ENCODE measurements at regions of chr10 and their contacts with region 1.

Region 1: DNA sequence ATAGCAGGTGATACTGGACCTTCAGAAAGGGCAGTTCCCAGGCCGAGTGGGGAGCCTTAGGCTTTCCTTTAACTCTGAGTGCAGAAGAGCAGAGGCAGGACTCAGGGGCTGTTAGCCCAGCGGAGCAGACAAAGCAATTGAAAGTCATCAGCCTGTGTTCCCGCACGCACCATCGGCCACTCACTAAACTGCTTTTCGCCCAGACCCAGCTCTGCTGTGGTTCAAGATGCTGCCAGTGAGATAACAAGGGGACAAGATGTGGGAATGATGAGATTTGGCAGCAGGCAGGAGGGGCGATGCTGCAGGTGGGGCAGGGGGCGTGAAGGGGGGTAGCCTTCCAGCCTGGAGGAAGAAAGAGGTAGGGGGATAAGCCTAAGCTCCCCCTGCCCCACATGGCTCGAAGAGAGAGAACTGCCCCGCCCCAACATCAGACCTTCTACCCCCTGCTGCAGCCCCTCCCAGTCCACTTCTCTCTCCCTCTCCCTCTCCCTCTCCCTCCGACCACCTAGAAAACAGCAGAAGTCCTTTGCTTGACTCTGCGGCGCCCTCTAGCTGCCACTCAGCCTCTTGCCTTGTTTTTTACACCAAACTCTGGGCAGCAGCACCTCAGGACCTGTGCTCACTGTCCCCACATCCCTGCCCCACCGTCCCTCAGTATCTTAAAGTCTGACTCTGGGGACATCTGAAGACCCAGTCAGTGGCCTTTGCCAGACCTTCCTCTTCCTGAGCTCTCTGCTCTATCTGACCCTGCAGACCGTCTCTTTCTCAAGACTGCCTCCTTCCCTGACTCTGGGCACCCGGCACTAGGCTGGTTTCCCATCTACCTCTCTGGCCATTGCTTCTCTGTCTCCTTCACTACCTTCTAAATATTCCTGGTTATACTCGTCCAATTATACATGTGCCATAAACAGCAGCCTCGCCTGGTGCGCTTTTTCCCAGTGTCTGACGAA is 110.5 kb downstream of the C10orf105 start:
- DNase-seq: peak; percentile 34 to 69 (median 63)
- ATAC-seq: peak; percentile 52
- H3K4me3 ChIP-seq: no peak overlapping the region
- H3K4me3 Mint-ChIP-seq: no peak overlapping the region
- H3K27ac ChIP-seq: no peak overlapping the region
- H3K27ac Mint-ChIP-seq: no peak overlapping the region
- H3K4me1 ChIP-seq: no peaks in the 10 kb centered on the region
- H3K4me1 Mint-ChIP-seq: no peaks in the 10 kb centered on the region
- H3K27me3 ChIP-seq: no peaks in the 10 kb centered on the region
- H3K27me3 Mint-ChIP-seq: peaks cover 13% of the 10 kb centered on the region
- CTCF ChIP-seq: peak; percentile 60

Region 2: DNA sequence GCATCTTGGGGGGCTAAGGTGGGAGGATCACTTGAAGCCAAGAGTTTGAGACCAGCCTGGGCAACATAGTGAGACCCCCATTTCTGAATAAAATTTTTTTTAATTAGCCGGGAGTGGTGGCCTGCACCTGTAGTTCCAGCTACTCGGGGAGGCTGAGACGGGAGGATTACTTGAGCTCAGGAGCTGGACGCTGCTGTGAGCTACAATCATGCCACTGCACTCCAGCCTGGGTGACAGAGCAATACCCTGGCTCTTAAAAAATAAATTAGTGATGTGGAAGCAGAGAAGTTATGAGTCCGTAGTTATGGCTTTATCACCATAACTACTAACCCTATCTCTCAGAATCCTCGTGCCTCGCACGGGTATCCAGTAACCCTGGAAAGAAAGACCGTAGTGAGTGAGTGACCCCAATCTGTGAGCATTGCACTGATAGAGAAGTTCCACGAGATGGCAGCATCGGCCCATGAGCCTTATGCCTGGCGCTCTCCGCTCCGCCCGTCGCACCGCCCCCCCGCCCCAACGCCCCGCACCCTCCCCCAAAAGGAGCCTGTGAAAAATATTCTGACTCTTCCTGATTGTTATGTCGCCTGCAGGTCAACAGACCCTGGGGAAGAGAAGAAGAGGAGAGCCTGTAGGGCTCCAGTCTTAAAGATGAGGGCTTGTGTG is 294.9 kb before region 1 on chr10:
- CTCF ChIA-PET with region 1: interaction called, 9 read pairs
- POLR2A ChIA-PET with region 1: no interaction called
- intact Hi-C with region 1: loop called (anchors 1 kb)
- DNase-seq: peak in 8 of 9 experiments; percentile 41 to 80 (median 62)
- ATAC-seq: peak; percentile 45
- H3K4me3 ChIP-seq: no peak overlapping the region
- H3K4me3 Mint-ChIP-seq: no peak overlapping the region
- H3K27ac ChIP-seq: no peak overlapping the region
- H3K27ac Mint-ChIP-seq: no peak overlapping the region
- H3K4me1 ChIP-seq: peaks cover 6% of the 10 kb centered on the region
- H3K4me1 Mint-ChIP-seq: peaks cover 11% of the 10 kb centered on the region
- H3K27me3 ChIP-seq: no peaks in the 10 kb centered on the region
- H3K27me3 Mint-ChIP-seq: peaks cover 7% of the 10 kb centered on the region
- CTCF ChIP-seq: peak; percentile 86

Region 3: DNA sequence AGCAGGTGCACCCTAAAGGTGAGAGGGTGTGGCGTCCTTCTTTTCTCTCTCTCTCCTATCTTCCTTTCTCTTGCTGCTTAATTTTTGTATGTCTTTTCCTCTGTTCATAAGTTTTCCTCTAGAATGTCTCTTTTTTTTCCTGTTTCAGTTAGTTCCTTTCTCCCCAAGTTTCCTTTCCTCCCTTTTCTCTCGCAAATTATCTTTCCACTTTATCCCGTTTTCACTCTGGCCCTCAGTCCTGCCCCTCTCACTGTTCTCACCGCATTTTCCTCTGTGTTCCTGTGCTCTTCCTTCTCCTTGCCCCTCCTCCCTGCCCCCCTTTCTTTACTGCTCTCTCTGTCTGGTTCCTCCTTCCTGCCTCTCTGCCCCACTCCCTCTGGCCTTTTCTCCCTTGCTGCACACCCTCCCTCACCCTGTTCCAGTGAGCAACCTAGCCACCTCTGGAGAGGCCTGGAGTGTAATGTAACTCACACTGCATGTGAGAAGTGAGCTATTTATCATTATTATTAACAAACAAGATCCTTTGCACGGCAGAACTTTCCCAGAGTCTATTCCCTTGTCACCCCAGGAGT is 48.0 kb before region 1 on chr10:
- CTCF ChIA-PET with region 1: no interaction called
- POLR2A ChIA-PET with region 1: no interaction called
- intact Hi-C with region 1: no loop called
- DNase-seq: no peak
- ATAC-seq: no peak
- H3K4me3 ChIP-seq: no peak overlapping the region
- H3K4me3 Mint-ChIP-seq: no peak overlapping the region
- H3K27ac ChIP-seq: no peak overlapping the region
- H3K27ac Mint-ChIP-seq: no peak overlapping the region
- H3K4me1 ChIP-seq: no peaks in the 10 kb centered on the region
- H3K4me1 Mint-ChIP-seq: no peaks in the 10 kb centered on the region
- H3K27me3 ChIP-seq: no peaks in the 10 kb centered on the region
- H3K27me3 Mint-ChIP-seq: peaks cover 18% of the 10 kb centered on the region
- CTCF ChIP-seq: no peak

Measured in CD8-positive, alpha-beta T cell (primary cell).